ENCODE measurements at regions of chr15 and their contacts with region 1.

Region 1: GRCh38 chr15:77543159-77543882 is 89.4 kb downstream of the LINGO1 start:
- DNase-seq: peak; percentile 89 to 94 (median 91)
- ATAC-seq: peak; percentile 87
- H3K4me3 ChIP-seq: no peak overlapping the region
- H3K27ac ChIP-seq: peak overlapping the region in 3 of 4 donors; percentile 18 to 63 (median 61)
- H3K4me1 ChIP-seq: peaks cover 34% of the 10 kb centered on the region
- H3K27me3 ChIP-seq: no peaks in the 10 kb centered on the region
- CTCF ChIP-seq: peak; percentile 97 to 99 (median 99)
- POLR2A ChIP-seq: peak in 2 of 3 donors; percentile 44 to 58

Region 2: GRCh38 chr15:77024271-77025082 is 518.8 kb before region 1 on chr15:
- intact Hi-C with region 1: loop called (anchors 10 kb)
- DNase-seq: peak; percentile 63 to 78 (median 73)
- ATAC-seq: peak; percentile 64
- H3K4me3 ChIP-seq: no peak overlapping the region
- H3K27ac ChIP-seq: no peak overlapping the region
- H3K4me1 ChIP-seq: peaks cover 16% of the 10 kb centered on the region
- H3K27me3 ChIP-seq: no peaks in the 10 kb centered on the region
- CTCF ChIP-seq: peak; percentile 79 to 96 (median 88)
- POLR2A ChIP-seq: no peak

Region 3: GRCh38 chr15:77584201-77584600 is 40.9 kb after region 1 on chr15:
- intact Hi-C with region 1: no loop called
- DNase-seq: no peak
- ATAC-seq: no peak
- H3K4me3 ChIP-seq: no peak overlapping the region
- H3K27ac ChIP-seq: no peak overlapping the region
- H3K4me1 ChIP-seq: no peaks in the 10 kb centered on the region
- H3K27me3 ChIP-seq: no peaks in the 10 kb centered on the region
- CTCF ChIP-seq: no peak
- POLR2A ChIP-seq: no peak

Measured in body of pancreas (tissue), 4 donors.